ENCODE measurements at regions of chr5 and their contacts with region 1.

Region 1: DNA sequence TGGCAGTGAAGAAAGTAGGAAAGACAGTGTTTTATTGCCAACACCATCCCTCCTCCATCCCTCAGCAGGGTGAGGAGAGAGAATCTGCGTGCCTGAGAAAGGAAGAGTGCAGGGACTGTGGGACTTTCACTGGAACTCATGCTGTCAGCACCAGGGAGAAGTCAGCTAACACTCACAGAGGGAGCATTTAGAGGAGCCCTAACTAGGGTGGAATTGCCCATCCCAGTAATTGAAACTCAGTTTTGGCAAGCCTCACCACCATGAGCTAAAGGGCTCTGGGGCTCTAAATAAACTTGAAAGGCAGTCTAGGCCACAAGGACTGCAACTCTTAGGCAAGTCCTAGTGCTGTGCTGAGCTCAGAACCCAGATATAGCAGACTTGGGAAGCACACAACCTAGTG is 622.3 kb downstream of the SEMA5A start:
- DNase-seq: no peak
- H3K4me3 ChIP-seq: no peak overlapping the region
- CTCF ChIP-seq: no peak
- POLR2A ChIP-seq: no peak

Region 2: GRCh38 chr5:7396710-7397454 is 1526.6 kb before region 1 on chr5:
- intact Hi-C with region 1: no loop called
- DNase-seq: peak in 1 of 2 donors; percentile 53
- H3K4me3 ChIP-seq: peak overlapping the region; percentile 72
- CTCF ChIP-seq: no peak
- POLR2A ChIP-seq: no peak

Region 3: DNA sequence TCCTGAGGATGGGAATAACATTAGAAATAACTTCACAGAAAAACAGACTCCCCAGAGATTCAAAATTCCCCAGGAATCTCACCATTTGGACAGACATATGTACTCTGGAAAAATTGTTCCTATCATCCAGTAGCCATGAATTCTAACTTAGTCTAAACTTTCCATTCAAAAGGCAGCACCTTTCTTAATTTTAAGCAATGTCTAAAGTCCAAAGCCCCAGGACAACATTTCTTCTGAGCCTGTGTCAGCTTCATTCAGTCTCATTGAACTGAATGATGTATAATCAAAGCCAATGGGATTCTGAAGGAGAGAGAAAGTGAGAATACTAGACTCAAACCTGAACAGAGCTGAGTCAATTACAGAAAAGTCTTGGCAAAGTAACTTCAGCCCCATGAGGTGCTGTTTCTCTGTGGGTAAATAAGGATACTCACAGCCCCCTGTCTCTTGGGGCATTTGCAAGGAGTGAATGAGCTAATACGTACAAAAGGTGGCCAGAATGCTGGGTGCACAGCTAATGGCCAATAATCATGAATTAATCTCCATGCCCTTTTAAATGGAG is 481.7 kb after region 1 on chr5:
- intact Hi-C with region 1: loop called (anchors 5 kb)
- DNase-seq: no peak
- H3K4me3 ChIP-seq: no peak overlapping the region
- CTCF ChIP-seq: no peak
- POLR2A ChIP-seq: no peak

Measured in lower leg skin (tissue), 4 donors.